Astrocyte of the cerebellum (primary cell): ENCODE measurements at regions of chr14 and their contacts with region 1.

Region 1: GRCh38 chr14:98244966-98245569 is 1026.9 kb downstream of the BCL11B start:
- DNase-seq: no peak
- H3K4me3 ChIP-seq: no peak overlapping the region
- CTCF ChIP-seq: no peak

Region 2: GRCh38 chr14:98288825-98289224 is 43.8 kb after region 1 on chr14:
- in situ Hi-C with region 1: loop called (anchors 5 kb)
- DNase-seq: no peak
- H3K4me3 ChIP-seq: no peak overlapping the region
- CTCF ChIP-seq: no peak